ENCODE measurements at regions of chr10 and their contacts with region 1.

Region 1: DNA sequence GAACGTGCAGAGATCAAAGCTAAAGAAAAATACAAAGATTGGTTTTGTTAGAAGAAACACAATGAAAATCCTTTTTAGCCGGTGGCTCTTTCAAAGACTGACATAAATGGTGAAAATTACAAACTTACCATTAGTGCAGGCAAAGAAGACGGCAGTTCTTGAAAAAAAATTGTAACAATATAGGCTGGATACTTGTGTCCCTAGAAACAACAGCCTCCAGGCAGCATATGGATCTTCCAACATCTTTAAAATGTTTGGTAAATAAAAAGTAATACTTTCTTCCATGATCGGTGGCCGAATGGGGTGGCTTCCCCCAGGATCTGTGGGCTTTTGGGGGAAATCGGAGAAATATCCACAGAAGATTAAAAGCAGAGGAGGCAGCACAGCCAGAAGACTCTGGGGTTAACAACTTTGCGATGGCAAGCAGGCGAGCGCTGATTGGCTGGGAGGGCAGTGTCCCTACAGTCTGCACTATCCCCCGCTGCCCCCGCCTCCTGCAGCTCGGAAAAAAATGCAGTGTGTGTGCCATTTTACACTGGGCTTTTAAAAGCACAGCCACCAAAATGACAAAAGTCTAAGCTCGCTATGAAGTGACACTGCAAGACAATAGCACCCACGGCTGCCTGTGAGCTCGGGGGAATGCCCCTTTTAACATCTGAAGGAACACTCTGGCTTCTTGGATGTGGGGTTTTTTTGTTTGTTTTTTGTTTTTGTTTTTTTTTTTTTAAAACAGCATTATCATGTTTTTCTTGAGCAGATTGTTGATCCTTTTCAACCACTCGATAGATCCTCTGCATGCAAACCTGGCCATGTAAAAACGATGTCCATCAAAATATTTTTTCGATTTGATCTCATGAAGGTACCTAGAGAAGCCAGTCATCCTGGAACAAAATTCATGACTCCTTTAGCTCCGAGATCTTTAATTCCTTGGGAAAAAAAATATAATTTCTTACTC is 31.7 kb upstream of the EPC1 start:
- DNase-seq: peak; percentile 92 to 95 (median 94)
- ATAC-seq: peak; percentile 94
- H3K4me3 ChIP-seq: peak overlapping the region; percentile 63
- H3K27ac ChIP-seq: peak overlapping the region; percentile 96
- H3K4me1 ChIP-seq: peaks cover 4 to 9% of the 10 kb centered on the region in 2 experiments; a peak in 3 of 5 replicates
- H3K27me3 ChIP-seq: no peaks in the 10 kb centered on the region
- CTCF ChIP-seq: no peak
- EP300 ChIP-seq: no peak
- POLR2A ChIP-seq: peak; percentile 83
- RAD21 ChIP-seq: no peak

Region 2: GRCh38 chr10:32417911-32418547 is 39.4 kb after region 1 on chr10:
- CTCF ChIA-PET with region 1: no interaction called
- POLR2A ChIA-PET with region 1: no interaction called
- in situ Hi-C with region 1: no loop called
- intact Hi-C with region 1: loop called (anchors 2 kb)
- DNase-seq: no peak
- ATAC-seq: peak; percentile 31; the same call in 1 of the 3 replicates
- H3K4me3 ChIP-seq: no peak overlapping the region
- H3K27ac ChIP-seq: 0 out of 3 replicates have a peak overlapping the region, but pooled peaks have one; percentile 3
- H3K4me1 ChIP-seq: peaks cover 0 to 4% of the 10 kb centered on the region in 2 experiments; a peak in 3 of 5 replicates
- H3K27me3 ChIP-seq: no peaks in the 10 kb centered on the region
- CTCF ChIP-seq: no peak
- EP300 ChIP-seq: no peak
- POLR2A ChIP-seq: no peak
- RAD21 ChIP-seq: no peak

Region 3: GRCh38 chr10:32445740-32446535 is 67.3 kb after region 1 on chr10 and contains the start of gene CCDC7:
- CTCF ChIA-PET with region 1: no interaction called
- POLR2A ChIA-PET with region 1: interaction called, 3 read pairs
- in situ Hi-C with region 1: no loop called
- intact Hi-C with region 1: loop called (anchors 2 kb)
- DNase-seq: peak; percentile 77 to 93 (median 82)
- ATAC-seq: peak; percentile 97
- H3K4me3 ChIP-seq: peak within 1 kb of the TSS; percentile 51
- H3K27ac ChIP-seq: peak within 1 kb of the TSS; percentile 96
- H3K4me1 ChIP-seq: no peaks in the 10 kb centered on the region; a peak in 1 of 5 replicates
- H3K27me3 ChIP-seq: no peaks in the 10 kb centered on the region
- CTCF ChIP-seq: peak; percentile 61 to 81 (median 77); a peak in 5 of 6 replicates
- EP300 ChIP-seq: no peak; the same call in 1 of the 2 replicates
- POLR2A ChIP-seq: peak; percentile 90
- RAD21 ChIP-seq: peak; percentile 45 to 63
- polyA plus RNA-seq, gene CCDC7: 1.5 to 2.7 TPM

Region 4: GRCh38 chr10:32577448-32577847 is 198.8 kb after region 1 on chr10:
- CTCF ChIA-PET with region 1: no interaction called
- POLR2A ChIA-PET with region 1: no interaction called
- in situ Hi-C with region 1: no loop called
- intact Hi-C with region 1: no loop called
- DNase-seq: no peak
- ATAC-seq: no peak
- H3K4me3 ChIP-seq: no peak overlapping the region
- H3K27ac ChIP-seq: no peak overlapping the region
- H3K4me1 ChIP-seq: no peaks in the 10 kb centered on the region
- H3K27me3 ChIP-seq: no peaks in the 10 kb centered on the region; a peak in 1 of 5 replicates
- CTCF ChIP-seq: no peak
- EP300 ChIP-seq: no peak
- POLR2A ChIP-seq: no peak
- RAD21 ChIP-seq: no peak

Region 5: GRCh38 chr10:32795598-32796183 is 417.1 kb after region 1 on chr10:
- CTCF ChIA-PET with region 1: no interaction called
- POLR2A ChIA-PET with region 1: no interaction called
- in situ Hi-C with region 1: no loop called
- intact Hi-C with region 1: loop called (anchors 10 kb)
- DNase-seq: peak; percentile 15 to 37 (median 22)
- ATAC-seq: peak; percentile 72
- H3K4me3 ChIP-seq: no peak overlapping the region
- H3K27ac ChIP-seq: no peak overlapping the region
- H3K4me1 ChIP-seq: no peaks in the 10 kb centered on the region
- H3K27me3 ChIP-seq: no peaks in the 10 kb centered on the region
- CTCF ChIP-seq: peak; percentile 59 to 84 (median 64); a peak in 5 of 6 replicates
- EP300 ChIP-seq: no peak
- POLR2A ChIP-seq: no peak
- RAD21 ChIP-seq: peak; percentile 96 to 97

Region 6: GRCh38 chr10:33008499-33009243 is 630.0 kb after region 1 on chr10:
- CTCF ChIA-PET with region 1: no interaction called
- POLR2A ChIA-PET with region 1: no interaction called
- in situ Hi-C with region 1: no loop called
- intact Hi-C with region 1: loop called (anchors 10 kb)
- DNase-seq: peak; percentile 59 to 80 (median 64)
- ATAC-seq: peak; percentile 75
- H3K4me3 ChIP-seq: no peak overlapping the region
- H3K27ac ChIP-seq: no peak overlapping the region
- H3K4me1 ChIP-seq: peaks cover 3 to 6% of the 10 kb centered on the region in 2 experiments; a peak in 3 of 5 replicates
- H3K27me3 ChIP-seq: peaks cover 0 to 3% of the 10 kb centered on the region in 2 experiments; a peak in 1 of 5 replicates
- CTCF ChIP-seq: peak; percentile 87 to 98 (median 94)
- EP300 ChIP-seq: no peak
- POLR2A ChIP-seq: no peak
- RAD21 ChIP-seq: peak; percentile 99 to 100